B cell (primary cell): ENCODE measurements at regions of chr17 and their contacts with region 1.

Region 1: DNA sequence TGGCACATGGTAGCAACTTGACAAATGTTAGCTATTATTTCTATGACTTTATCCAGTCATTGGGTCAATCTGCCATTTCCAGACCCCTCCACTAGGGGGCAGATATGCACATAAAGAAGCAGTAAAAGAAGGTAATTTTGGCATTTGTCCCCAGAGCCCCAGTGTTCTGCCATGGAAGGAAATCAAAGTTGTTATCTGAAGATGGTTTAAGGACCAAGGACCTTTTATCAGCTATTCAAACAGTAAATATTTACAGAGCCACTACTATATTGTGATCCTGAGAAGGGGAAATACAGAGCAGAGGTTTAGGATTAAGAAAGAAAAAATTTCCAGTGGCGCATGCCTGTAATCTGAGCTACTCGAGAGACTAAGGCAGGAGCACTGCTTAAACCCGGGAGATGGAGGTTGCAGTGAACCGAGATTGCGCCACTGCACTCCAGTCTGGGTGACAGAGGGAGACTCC is 20.0 kb downstream of the TRAF4 start:
- DNase-seq: peak; percentile 83
- ATAC-seq: peak; percentile 85
- H3K4me3 ChIP-seq: no peak overlapping the region
- H3K4me3 Mint-ChIP-seq: no peak overlapping the region
- H3K27ac ChIP-seq: no peak overlapping the region
- H3K27ac Mint-ChIP-seq: no peak overlapping the region
- H3K4me1 ChIP-seq: peaks cover 0 to 8% of the 10 kb centered on the region in 2 donors
- H3K4me1 Mint-ChIP-seq: peaks cover 11% of the 10 kb centered on the region
- H3K27me3 ChIP-seq: no peaks in the 10 kb centered on the region
- H3K27me3 Mint-ChIP-seq: no peaks in the 10 kb centered on the region
- CTCF ChIP-seq: peak; percentile 94

Region 2: GRCh38 chr17:28684963-28685362 is 78.9 kb before region 1 on chr17:
- CTCF ChIA-PET with region 1: no interaction called
- POLR2A ChIA-PET with region 1: no interaction called
- intact Hi-C with region 1: no loop called
- DNase-seq: no peak
- ATAC-seq: no peak
- H3K4me3 ChIP-seq: no peak overlapping the region
- H3K4me3 Mint-ChIP-seq: no peak overlapping the region
- H3K27ac ChIP-seq: no peak overlapping the region
- H3K27ac Mint-ChIP-seq: no peak overlapping the region
- H3K4me1 ChIP-seq: no peaks in the 10 kb centered on the region
- H3K4me1 Mint-ChIP-seq: no peaks in the 10 kb centered on the region
- H3K27me3 ChIP-seq: no peaks in the 10 kb centered on the region
- H3K27me3 Mint-ChIP-seq: no peaks in the 10 kb centered on the region
- CTCF ChIP-seq: no peak

Region 3: GRCh38 chr17:28777178-28777577 is 13.3 kb after region 1 on chr17:
- CTCF ChIA-PET with region 1: interaction called, 33 read pairs
- POLR2A ChIA-PET with region 1: no interaction called
- intact Hi-C with region 1: no loop called
- DNase-seq: no peak
- ATAC-seq: no peak
- H3K4me3 ChIP-seq: no peak overlapping the region
- H3K4me3 Mint-ChIP-seq: no peak overlapping the region
- H3K27ac ChIP-seq: peak overlapping the region in 1 of 2 donors; percentile 2
- H3K27ac Mint-ChIP-seq: peak overlapping the region; percentile 55
- H3K4me1 ChIP-seq: peaks cover 0 to 4% of the 10 kb centered on the region in 2 donors
- H3K4me1 Mint-ChIP-seq: peaks cover 31% of the 10 kb centered on the region
- H3K27me3 ChIP-seq: no peaks in the 10 kb centered on the region
- H3K27me3 Mint-ChIP-seq: no peaks in the 10 kb centered on the region
- CTCF ChIP-seq: no peak

Region 4: GRCh38 chr17:28849281-28849680 is 85.4 kb after region 1 on chr17:
- CTCF ChIA-PET with region 1: interaction called, 17 read pairs
- POLR2A ChIA-PET with region 1: interaction called, 4 read pairs
- intact Hi-C with region 1: no loop called
- DNase-seq: no peak
- ATAC-seq: no peak
- H3K4me3 ChIP-seq: no peak overlapping the region
- H3K4me3 Mint-ChIP-seq: no peak overlapping the region
- H3K27ac ChIP-seq: no peak overlapping the region
- H3K27ac Mint-ChIP-seq: no peak overlapping the region
- H3K4me1 ChIP-seq: peaks cover 3% of the 10 kb centered on the region in 2 donors
- H3K4me1 Mint-ChIP-seq: peaks cover 3% of the 10 kb centered on the region
- H3K27me3 ChIP-seq: no peaks in the 10 kb centered on the region
- H3K27me3 Mint-ChIP-seq: no peaks in the 10 kb centered on the region
- CTCF ChIP-seq: no peak

Region 5: DNA sequence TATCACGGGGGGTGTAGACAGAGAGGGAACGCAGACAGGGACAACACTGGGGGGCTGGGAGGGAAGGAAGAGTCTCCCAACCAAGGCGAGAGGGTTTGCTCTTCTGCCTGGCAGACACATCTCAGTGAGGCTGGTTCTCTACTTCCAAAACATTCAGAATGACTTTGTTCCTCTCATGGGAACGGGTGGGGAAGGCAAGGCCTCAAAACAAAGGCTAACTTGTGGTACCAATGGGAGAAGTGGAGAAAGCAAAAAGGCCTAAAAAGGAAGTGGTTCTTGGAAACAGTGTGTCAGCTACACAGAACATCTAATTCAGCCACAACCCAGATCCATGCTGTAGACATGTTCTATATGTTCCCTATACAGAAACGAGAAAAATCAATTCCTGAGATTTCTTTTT is 126.2 kb after region 1 on chr17:
- CTCF ChIA-PET with region 1: interaction called, 21 read pairs
- POLR2A ChIA-PET with region 1: no interaction called
- intact Hi-C with region 1: no loop called
- DNase-seq: no peak
- ATAC-seq: no peak
- H3K4me3 ChIP-seq: no peak overlapping the region
- H3K4me3 Mint-ChIP-seq: peak overlapping the region; percentile 45
- H3K27ac ChIP-seq: no peak overlapping the region
- H3K27ac Mint-ChIP-seq: peak overlapping the region; percentile 75
- H3K4me1 ChIP-seq: peaks cover 54 to 71% of the 10 kb centered on the region in 2 donors
- H3K4me1 Mint-ChIP-seq: peaks cover 75% of the 10 kb centered on the region
- H3K27me3 ChIP-seq: no peaks in the 10 kb centered on the region
- H3K27me3 Mint-ChIP-seq: no peaks in the 10 kb centered on the region
- CTCF ChIP-seq: no peak

Region 6: GRCh38 chr17:28928061-28928460 is 164.2 kb after region 1 on chr17:
- CTCF ChIA-PET with region 1: interaction called, 14 read pairs
- POLR2A ChIA-PET with region 1: no interaction called
- intact Hi-C with region 1: no loop called
- DNase-seq: no peak
- ATAC-seq: no peak
- H3K4me3 ChIP-seq: no peak overlapping the region
- H3K4me3 Mint-ChIP-seq: no peak overlapping the region
- H3K27ac ChIP-seq: no peak overlapping the region
- H3K27ac Mint-ChIP-seq: peak overlapping the region; percentile 56
- H3K4me1 ChIP-seq: peaks cover 23 to 27% of the 10 kb centered on the region in 2 donors
- H3K4me1 Mint-ChIP-seq: peaks cover 52% of the 10 kb centered on the region
- H3K27me3 ChIP-seq: no peaks in the 10 kb centered on the region
- H3K27me3 Mint-ChIP-seq: no peaks in the 10 kb centered on the region
- CTCF ChIP-seq: no peak

Region 7: GRCh38 chr17:29116804-29117772 is 353.3 kb after region 1 on chr17:
- CTCF ChIA-PET with region 1: interaction called, 10 read pairs
- POLR2A ChIA-PET with region 1: no interaction called
- intact Hi-C with region 1: loop called (anchors 1 kb)
- DNase-seq: peak; percentile 77
- ATAC-seq: peak; percentile 70
- H3K4me3 ChIP-seq: no peak overlapping the region
- H3K4me3 Mint-ChIP-seq: no peak overlapping the region
- H3K27ac ChIP-seq: no peak overlapping the region
- H3K27ac Mint-ChIP-seq: no peak overlapping the region
- H3K4me1 ChIP-seq: no peaks in the 10 kb centered on the region
- H3K4me1 Mint-ChIP-seq: peaks cover 5% of the 10 kb centered on the region
- H3K27me3 ChIP-seq: no peaks in the 10 kb centered on the region
- H3K27me3 Mint-ChIP-seq: no peaks in the 10 kb centered on the region
- CTCF ChIP-seq: peak; percentile 95